Pancreas (tissue), 10 donors: ENCODE measurements at regions of chr15 and their contacts with region 1.

Region 1: DNA sequence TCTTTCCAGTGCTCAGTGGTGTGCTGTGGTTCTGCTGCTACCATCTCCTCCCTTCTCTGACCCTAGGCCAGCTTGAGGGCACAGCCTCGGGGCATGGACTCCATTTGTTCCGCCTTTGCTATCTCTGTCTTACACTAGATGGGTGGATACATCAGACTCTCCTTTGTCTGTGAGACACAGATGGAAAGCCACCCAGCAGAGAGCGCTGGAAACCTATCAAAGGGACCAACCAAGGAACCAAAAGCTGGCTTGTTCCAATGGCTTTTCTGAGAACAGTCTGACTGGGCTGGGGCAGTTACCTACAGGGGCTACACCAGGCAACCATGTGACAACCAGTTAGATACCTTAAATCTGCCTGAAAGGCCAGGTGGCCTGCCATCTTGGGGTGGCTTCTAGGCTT is 63.8 kb downstream of the NPTN start:
- DNase-seq: no peak
- ATAC-seq: no peak
- H3K4me3 ChIP-seq: no peak overlapping the region
- H3K27ac ChIP-seq: no peak overlapping the region
- H3K4me1 ChIP-seq: peaks cover 0 to 20% (median 4%) of the 10 kb centered on the region in 3 donors
- H3K27me3 ChIP-seq: no peaks in the 10 kb centered on the region
- CTCF ChIP-seq: no peak

Region 2: DNA sequence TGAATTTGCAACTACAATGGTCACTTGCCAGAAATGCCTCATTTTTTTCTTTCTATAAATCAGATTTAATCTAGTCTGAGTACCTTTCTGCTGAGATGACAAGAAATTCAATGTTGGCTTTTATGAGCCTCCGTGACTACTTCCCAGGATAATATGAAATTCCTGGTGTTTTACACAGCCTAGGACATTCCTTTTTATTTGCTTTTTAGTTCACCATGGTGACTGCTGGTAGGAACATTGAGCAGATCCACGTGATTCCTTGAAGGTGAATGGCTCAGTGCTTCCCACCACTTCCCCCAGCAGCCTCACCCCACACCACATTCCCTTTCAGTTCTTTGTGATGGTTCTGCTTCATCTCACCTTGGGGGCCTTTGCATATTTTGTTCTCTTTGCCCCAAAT is 68.2 kb after region 1 on chr15:
- intact Hi-C with region 1: loop called in 2 of 3 experiments (anchors 5 kb)
- DNase-seq: no peak
- ATAC-seq: no peak
- H3K4me3 ChIP-seq: no peak overlapping the region
- H3K27ac ChIP-seq: no peak overlapping the region
- H3K4me1 ChIP-seq: peaks cover 0 to 6% (median 0%) of the 10 kb centered on the region in 3 donors
- H3K27me3 ChIP-seq: no peaks in the 10 kb centered on the region
- CTCF ChIP-seq: no peak